GM12878 (cell line): ENCODE measurements at regions of chr14 and their contacts with region 1.

Region 1: DNA sequence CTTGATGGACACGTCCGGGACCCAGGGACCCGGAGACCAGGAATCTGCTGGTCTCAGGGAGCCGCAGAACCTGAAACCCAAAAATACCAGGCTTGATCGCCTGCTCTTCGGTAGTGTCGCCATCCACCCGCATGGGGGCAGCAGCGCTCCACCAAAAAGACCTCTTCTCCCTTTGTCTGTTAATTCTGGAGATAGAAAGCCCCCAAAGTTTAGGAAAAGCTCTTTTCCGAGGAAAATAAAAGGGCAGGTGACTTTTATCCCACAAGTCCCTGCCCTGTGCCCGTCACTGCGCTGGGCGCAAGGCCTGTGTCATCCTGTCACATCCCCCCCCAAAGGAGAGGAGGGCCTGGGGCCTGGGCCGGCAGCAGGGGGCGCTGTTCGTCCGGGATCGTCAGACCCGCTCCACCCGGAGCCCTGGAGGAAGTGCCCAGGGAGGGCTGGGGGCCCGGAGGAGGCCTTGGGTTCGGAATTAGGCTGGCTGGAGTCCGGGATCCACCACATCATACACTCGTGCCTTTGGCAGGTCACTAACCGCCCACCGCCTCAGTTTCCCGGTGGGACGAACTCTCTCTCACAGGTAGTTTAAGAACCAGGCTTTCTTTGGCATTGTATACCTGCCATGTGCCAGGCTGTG is 31.9 kb downstream of the DAD1 start:
- DNase-seq: no peak
- ATAC-seq: peak; percentile 58
- H3K4me3 ChIP-seq: peak overlapping the region; percentile 51; the same call in 1 of the 2 replicates
- H3K27ac ChIP-seq: peak overlapping the region; percentile 100
- H3K4me1 ChIP-seq: peaks cover 73% of the 10 kb centered on the region
- H3K27me3 ChIP-seq: no peaks in the 10 kb centered on the region
- CTCF ChIP-seq: peak; percentile 66 to 93 (median 86)
- EP300 ChIP-seq: no peak
- POLR2A ChIP-seq: peak; percentile 5; the same call in 1 of the 2 replicates
- RAD21 ChIP-seq: peak; percentile 74

Region 2: GRCh38 chr14:22319526-22320361 is 237.4 kb before region 1 on chr14:
- CTCF ChIA-PET with region 1: interaction called, 14 read pairs
- POLR2A ChIA-PET with region 1: no interaction called
- RAD21 ChIA-PET with region 1: interaction called, 6 read pairs
- SMC1A ChIA-PET with region 1: interaction called, 6 read pairs
- in situ Hi-C with region 1: no loop called
- intact Hi-C with region 1: loop called (anchors 5 kb)
- DNase-seq: peak; percentile 42
- ATAC-seq: peak; percentile 97
- H3K4me3 ChIP-seq: no peak overlapping the region
- H3K27ac ChIP-seq: no peak overlapping the region
- H3K4me1 ChIP-seq: no peaks in the 10 kb centered on the region
- H3K27me3 ChIP-seq: no peaks in the 10 kb centered on the region
- CTCF ChIP-seq: peak; percentile 68 to 80 (median 73); a peak in 5 of 6 replicates
- EP300 ChIP-seq: no peak
- POLR2A ChIP-seq: no peak
- RAD21 ChIP-seq: peak; percentile 83

Region 3: GRCh38 chr14:22478670-22479069 is 78.4 kb before region 1 on chr14:
- CTCF ChIA-PET with region 1: interaction called, 236 read pairs
- POLR2A ChIA-PET with region 1: interaction called, 36 read pairs
- RAD21 ChIA-PET with region 1: interaction called, 50 read pairs
- SMC1A ChIA-PET with region 1: interaction called, 49 read pairs
- in situ Hi-C with region 1: no loop called
- intact Hi-C with region 1: loop called (anchors 2 kb)
- DNase-seq: no peak
- ATAC-seq: peak; percentile 5; the same call in 1 of the 3 replicates
- H3K4me3 ChIP-seq: peak overlapping the region; percentile 66; the same call in 1 of the 2 replicates
- H3K27ac ChIP-seq: peak overlapping the region; percentile 98
- H3K4me1 ChIP-seq: peaks cover 71% of the 10 kb centered on the region
- H3K27me3 ChIP-seq: no peaks in the 10 kb centered on the region
- CTCF ChIP-seq: no peak
- EP300 ChIP-seq: 0 out of 4 replicates have a peak, but pooled peaks of 1 of the 2 experiments have one; percentile 1
- POLR2A ChIP-seq: no peak
- RAD21 ChIP-seq: no peak

Region 4: GRCh38 chr14:22497144-22497423 is 60.0 kb before region 1 on chr14:
- CTCF ChIA-PET with region 1: interaction called, 19 read pairs
- POLR2A ChIA-PET with region 1: interaction called, 11 read pairs
- RAD21 ChIA-PET with region 1: interaction called, 37 read pairs
- SMC1A ChIA-PET with region 1: interaction called, 40 read pairs
- in situ Hi-C with region 1: no loop called
- intact Hi-C with region 1: no loop called
- DNase-seq: no peak
- ATAC-seq: peak; percentile 18
- H3K4me3 ChIP-seq: 0 out of 2 replicates have a peak overlapping the region, but pooled peaks have one; percentile 35
- H3K27ac ChIP-seq: peak overlapping the region; percentile 65
- H3K4me1 ChIP-seq: peaks cover 62% of the 10 kb centered on the region
- H3K27me3 ChIP-seq: no peaks in the 10 kb centered on the region
- CTCF ChIP-seq: no peak
- EP300 ChIP-seq: no peak
- POLR2A ChIP-seq: no peak
- RAD21 ChIP-seq: no peak

Region 5: GRCh38 chr14:22519877-22520685 is 37.0 kb before region 1 on chr14:
- CTCF ChIA-PET with region 1: interaction called, 4 read pairs
- POLR2A ChIA-PET with region 1: interaction called, 8 read pairs
- RAD21 ChIA-PET with region 1: interaction called, 20 read pairs
- SMC1A ChIA-PET with region 1: interaction called, 44 read pairs
- in situ Hi-C with region 1: no loop called
- intact Hi-C with region 1: no loop called
- DNase-seq: no peak
- ATAC-seq: no peak
- H3K4me3 ChIP-seq: peak overlapping the region; percentile 15; the same call in 1 of the 2 replicates
- H3K27ac ChIP-seq: peak overlapping the region; percentile 80
- H3K4me1 ChIP-seq: peaks cover 99% of the 10 kb centered on the region
- H3K27me3 ChIP-seq: no peaks in the 10 kb centered on the region
- CTCF ChIP-seq: no peak
- EP300 ChIP-seq: no peak
- POLR2A ChIP-seq: no peak
- RAD21 ChIP-seq: no peak

Region 6: GRCh38 chr14:22653012-22653621 is 96.0 kb after region 1 on chr14:
- CTCF ChIA-PET with region 1: interaction called, 14 read pairs
- POLR2A ChIA-PET with region 1: interaction called, 5 read pairs
- RAD21 ChIA-PET with region 1: interaction called, 21 read pairs
- SMC1A ChIA-PET with region 1: interaction called, 7 read pairs
- in situ Hi-C with region 1: no loop called
- intact Hi-C with region 1: loop called (anchors 1 kb)
- DNase-seq: no peak
- ATAC-seq: peak; percentile 89
- H3K4me3 ChIP-seq: no peak overlapping the region
- H3K27ac ChIP-seq: no peak overlapping the region
- H3K4me1 ChIP-seq: no peaks in the 10 kb centered on the region
- H3K27me3 ChIP-seq: no peaks in the 10 kb centered on the region
- CTCF ChIP-seq: peak; percentile 87 to 92 (median 88)
- EP300 ChIP-seq: no peak
- POLR2A ChIP-seq: no peak
- RAD21 ChIP-seq: peak; percentile 91